Ascending aorta (tissue), 2 donors: ENCODE measurements at regions of chr16 and their contacts with region 1.

Region 1: GRCh38 chr16:11396241-11397048 is 51.2 kb downstream of the RMI2 start:
- DNase-seq: peak in 1 of 2 donors; percentile 83
- H3K4me3 ChIP-seq: no peak overlapping the region
- H3K27ac ChIP-seq: no peak overlapping the region
- H3K4me1 ChIP-seq: peaks cover 0 to 3% of the 10 kb centered on the region in 2 donors
- H3K27me3 ChIP-seq: no peaks in the 10 kb centered on the region
- CTCF ChIP-seq: peak; percentile 96 to 99 (median 99)

Region 2: DNA sequence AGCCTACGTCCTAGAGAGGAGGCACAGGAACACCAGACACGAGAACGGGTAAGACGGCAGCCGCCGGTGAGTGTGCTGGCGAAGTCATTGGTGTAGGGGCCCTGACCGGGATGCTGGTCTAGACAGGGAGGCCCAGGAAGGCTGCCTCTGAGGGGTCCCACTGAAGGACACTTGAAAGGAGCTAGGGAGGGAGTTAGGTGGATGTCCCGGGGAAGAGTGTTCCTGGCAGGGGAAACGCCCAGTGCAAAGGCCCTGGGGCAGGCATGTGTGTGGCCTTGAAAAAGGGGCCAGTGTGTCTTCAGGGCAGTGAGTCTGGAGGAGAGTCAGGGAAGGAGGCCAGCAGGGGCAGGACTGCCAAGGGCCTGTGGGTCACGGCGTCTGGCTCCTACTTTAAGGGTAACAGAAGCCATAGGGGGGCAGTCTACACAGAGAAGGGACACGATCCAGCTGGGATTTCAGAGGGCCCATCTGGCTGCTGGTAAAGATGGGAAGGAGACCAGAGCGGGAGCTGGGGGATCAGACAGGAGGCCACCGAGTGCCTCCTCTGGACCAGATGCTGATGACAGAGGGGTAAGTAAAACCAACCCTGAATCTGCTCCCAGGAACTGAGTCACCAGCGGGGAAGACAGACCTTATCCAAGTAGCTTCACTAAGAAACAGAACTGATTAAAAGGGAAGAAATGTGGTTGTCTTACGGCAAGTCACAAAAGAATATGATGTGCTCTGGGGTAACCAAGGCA is 74.4 kb after region 1 on chr16:
- intact Hi-C with region 1: no loop called
- DNase-seq: no peak
- H3K4me3 ChIP-seq: no peak overlapping the region
- H3K27ac ChIP-seq: no peak overlapping the region
- H3K4me1 ChIP-seq: no peaks in the 10 kb centered on the region
- H3K27me3 ChIP-seq: no peaks in the 10 kb centered on the region
- CTCF ChIP-seq: no peak

Region 3: DNA sequence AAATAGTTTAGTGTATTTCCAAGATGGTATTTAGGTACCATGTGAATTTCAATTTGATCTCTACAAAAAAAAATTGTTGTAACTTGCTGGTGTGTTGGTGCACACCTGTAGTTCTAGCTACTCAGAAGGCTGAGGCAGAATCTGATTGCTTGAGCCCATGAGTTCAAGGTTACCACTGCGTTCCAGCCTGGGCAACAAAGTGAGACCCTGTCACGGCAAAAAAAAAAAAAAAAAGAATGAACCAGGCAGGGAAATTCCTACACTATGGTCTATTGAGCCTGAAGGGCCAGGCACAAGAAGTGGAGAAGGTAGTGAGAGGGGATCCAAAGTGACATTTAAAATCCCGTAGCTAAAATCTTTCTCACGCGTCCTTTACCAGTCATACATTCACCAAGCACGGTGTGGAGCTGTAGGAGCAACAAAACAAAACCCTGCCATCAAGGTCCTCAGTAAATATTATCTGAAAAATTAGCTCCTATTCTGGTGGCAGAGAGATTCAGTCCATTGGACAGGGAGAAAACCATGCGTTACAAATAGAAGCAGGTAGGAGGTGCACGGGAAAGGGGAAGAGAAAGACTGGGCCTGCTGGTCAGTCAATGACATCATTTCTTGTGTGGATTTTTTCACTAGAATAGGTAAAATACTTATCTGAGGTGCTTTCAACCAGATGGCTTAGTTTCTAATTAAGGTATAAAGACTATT is 319.0 kb after region 1 on chr16:
- intact Hi-C with region 1: loop called (anchors 1 kb)
- DNase-seq: no peak
- H3K4me3 ChIP-seq: no peak overlapping the region
- H3K27ac ChIP-seq: no peak overlapping the region
- H3K4me1 ChIP-seq: no peaks in the 10 kb centered on the region
- H3K27me3 ChIP-seq: no peaks in the 10 kb centered on the region
- CTCF ChIP-seq: no peak

Region 4: DNA sequence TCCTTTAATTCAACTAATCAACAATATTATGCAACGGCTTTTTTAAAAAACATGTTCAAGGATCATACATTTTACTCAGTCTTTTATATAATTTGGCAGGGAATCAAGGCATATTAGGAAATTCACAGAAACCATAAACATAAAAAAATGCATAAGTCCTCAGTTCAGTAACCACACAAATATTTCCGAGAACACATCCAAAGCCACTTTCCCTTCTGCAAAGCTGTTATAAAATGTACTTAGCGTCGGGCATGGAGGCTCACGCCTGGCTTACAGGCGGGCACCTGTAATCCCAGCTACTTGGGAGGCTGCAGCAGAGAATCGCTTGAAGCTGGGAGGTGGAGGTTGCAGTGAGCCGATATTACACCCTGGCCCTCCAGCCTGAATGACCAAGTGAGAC is 410.3 kb after region 1 on chr16:
- intact Hi-C with region 1: loop called (anchors 5 kb)
- DNase-seq: no peak
- H3K4me3 ChIP-seq: no peak overlapping the region
- H3K27ac ChIP-seq: no peak overlapping the region
- H3K4me1 ChIP-seq: peaks cover 0 to 3% of the 10 kb centered on the region in 2 donors
- H3K27me3 ChIP-seq: no peaks in the 10 kb centered on the region
- CTCF ChIP-seq: no peak